CD14-positive monocyte (primary cell): ENCODE measurements at regions of chr10 and their contacts with region 1.

Region 1: GRCh38 chr10:31031558-31032257 is at the start of gene ZNF438:
- DNase-seq: peak; percentile 93 to 97 (median 94)
- H3K4me3 ChIP-seq: peak within 1 kb of the TSS; percentile 74 to 94 (median 84)
- H3K4me3 Mint-ChIP-seq: peak within 1 kb of the TSS; percentile 84 to 94
- H3K27ac ChIP-seq: peak within 1 kb of the TSS; percentile 96 to 100
- H3K27ac Mint-ChIP-seq: peak within 1 kb of the TSS; percentile 98 to 100 (median 99)
- H3K4me1 ChIP-seq: peaks cover 40 to 41% of the 10 kb centered on the region in 2 donors
- H3K4me1 Mint-ChIP-seq: peaks cover 45% of the 10 kb centered on the region
- H3K27me3 ChIP-seq: no peaks in the 10 kb centered on the region
- H3K27me3 Mint-ChIP-seq: no peaks in the 10 kb centered on the region
- CTCF ChIP-seq: peak; percentile 76
- polyA plus RNA-seq, gene ZNF438: 5.4 to 11.1 (median 9.3) TPM

Region 2: DNA sequence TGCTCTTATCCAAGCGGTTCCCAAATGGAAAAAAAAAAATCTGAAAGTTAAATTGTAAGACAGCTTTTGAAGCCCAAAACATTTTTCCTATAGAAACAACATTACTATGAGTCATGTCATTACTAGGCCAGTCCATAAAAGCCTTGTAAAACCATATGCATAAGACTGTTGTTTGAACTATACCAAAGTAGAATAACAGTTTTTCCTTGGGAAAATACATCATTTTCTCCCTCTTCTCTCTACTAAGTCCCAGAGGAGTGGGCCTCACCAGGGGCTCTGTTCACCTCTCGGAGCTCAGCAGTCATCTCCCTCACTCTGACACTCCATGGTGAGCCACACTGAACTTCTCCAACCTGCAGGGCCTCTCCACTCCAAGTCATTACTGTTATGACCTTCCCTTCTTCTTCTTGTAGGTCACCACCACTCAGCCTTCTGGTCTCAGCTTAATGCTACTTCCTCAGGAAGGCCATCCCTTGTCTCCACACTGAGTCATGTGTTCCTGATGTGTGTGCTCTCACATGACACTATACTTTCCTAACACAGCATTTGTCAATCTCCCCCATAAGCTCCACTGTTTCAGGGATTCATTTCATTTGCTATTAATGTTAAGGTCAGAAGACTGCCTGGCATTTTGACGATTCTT is 32.5 kb before region 1 on chr10:
- intact Hi-C with region 1: loop called (anchors 1 to 5 kb)
- DNase-seq: peak; percentile 94 to 99 (median 98)
- H3K4me3 ChIP-seq: peak overlapping the region; percentile 37 to 74 (median 72)
- H3K4me3 Mint-ChIP-seq: peak overlapping the region; percentile 86 to 96
- H3K27ac ChIP-seq: peak overlapping the region; percentile 94 to 98
- H3K27ac Mint-ChIP-seq: peak overlapping the region; percentile 98 to 100 (median 99)
- H3K4me1 ChIP-seq: peaks cover 65 to 96% of the 10 kb centered on the region in 2 donors
- H3K4me1 Mint-ChIP-seq: peaks cover 89% of the 10 kb centered on the region
- H3K27me3 ChIP-seq: no peaks in the 10 kb centered on the region
- H3K27me3 Mint-ChIP-seq: no peaks in the 10 kb centered on the region
- CTCF ChIP-seq: no peak

Region 3: GRCh38 chr10:31581741-31582313 is 550.1 kb after region 1 on chr10:
- intact Hi-C with region 1: loop called in 1 of 2 experiments (anchors 10 kb)
- DNase-seq: peak; percentile 81 to 92 (median 87)
- H3K4me3 ChIP-seq: peak overlapping the region; percentile 3 to 62 (median 9)
- H3K4me3 Mint-ChIP-seq: peak overlapping the region; percentile 39 to 87
- H3K27ac ChIP-seq: peak overlapping the region; percentile 84 to 99
- H3K27ac Mint-ChIP-seq: peak overlapping the region; percentile 95 to 99 (median 98)
- H3K4me1 ChIP-seq: peaks cover 60 to 65% of the 10 kb centered on the region in 2 donors
- H3K4me1 Mint-ChIP-seq: peaks cover 61% of the 10 kb centered on the region
- H3K27me3 ChIP-seq: no peaks in the 10 kb centered on the region
- H3K27me3 Mint-ChIP-seq: peaks cover 0 to 3% (median 0%) of the 10 kb centered on the region in 3 donors
- CTCF ChIP-seq: no peak